ENCODE measurements at regions of chr6 and their contacts with region 1.

Region 1: DNA sequence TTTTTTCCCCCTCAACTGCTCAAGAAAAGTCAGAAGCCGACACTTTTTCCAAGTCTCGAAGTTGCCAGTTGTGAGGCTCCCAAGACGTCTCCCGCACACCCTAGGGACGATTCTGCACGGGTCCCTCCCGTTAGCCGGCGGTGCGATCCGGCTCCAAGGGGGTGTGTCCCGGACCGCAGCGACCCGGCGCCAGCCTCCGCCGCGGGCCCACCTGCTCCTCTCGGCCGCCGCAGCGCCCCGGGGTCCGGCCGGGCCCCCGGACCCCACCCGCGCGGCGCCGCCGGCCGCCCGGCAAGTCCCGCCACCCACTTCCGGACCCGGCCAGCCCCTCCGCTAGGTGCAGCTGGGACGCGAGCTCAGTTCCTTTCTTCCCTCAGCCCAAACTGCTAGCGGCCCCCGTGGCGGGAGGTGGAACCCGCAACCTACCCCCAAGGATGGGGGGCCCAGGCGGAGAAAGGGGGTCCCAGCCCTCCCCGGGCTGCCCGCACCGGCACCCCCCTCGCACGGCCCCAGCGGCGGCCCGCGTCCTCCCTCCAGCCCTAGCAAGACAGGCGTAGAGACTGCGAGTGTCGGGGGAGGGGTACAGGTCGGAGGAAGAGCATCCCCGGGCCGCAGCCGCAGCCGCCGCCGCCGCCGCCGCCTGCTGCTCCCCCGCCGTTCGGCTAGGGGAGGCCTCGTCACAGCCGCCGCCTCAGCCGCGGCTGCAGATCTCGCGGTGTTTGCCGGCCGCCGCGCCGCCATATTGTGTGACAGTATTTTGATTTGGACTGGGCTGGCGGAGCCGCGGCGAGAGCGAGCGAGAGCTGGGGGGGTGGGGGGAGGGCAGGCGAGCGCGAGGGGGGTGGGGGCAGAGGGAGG is 485 bp upstream of the TAB2 start:
- DNase-seq: peak; percentile 90
- H3K4me3 ChIP-seq: peak overlapping the region; percentile 69 to 97 (median 79)
- H3K27ac ChIP-seq: peak overlapping the region; percentile 92
- H3K4me1 ChIP-seq: peaks cover 18% of the 10 kb centered on the region
- H3K27me3 ChIP-seq: peaks cover 18 to 30% of the 10 kb centered on the region in 2 experiments
- CTCF ChIP-seq: no peak
- POLR2A ChIP-seq: no peak

Region 2: GRCh38 chr6:149233056-149233715 is 83.8 kb before region 1 on chr6:
- CTCF ChIA-PET with region 1: interaction called, 3 read pairs
- POLR2A ChIA-PET with region 1: no interaction called
- dilution Hi-C with region 1: no loop called
- intact Hi-C with region 1: loop called (anchors 1 kb)
- DNase-seq: peak; percentile 76
- H3K4me3 ChIP-seq: no peak overlapping the region
- H3K27ac ChIP-seq: peak overlapping the region; percentile 40
- H3K4me1 ChIP-seq: peaks cover 32% of the 10 kb centered on the region
- H3K27me3 ChIP-seq: peaks cover 0 to 5% of the 10 kb centered on the region in 2 experiments
- CTCF ChIP-seq: no peak
- POLR2A ChIP-seq: no peak

Region 3: DNA sequence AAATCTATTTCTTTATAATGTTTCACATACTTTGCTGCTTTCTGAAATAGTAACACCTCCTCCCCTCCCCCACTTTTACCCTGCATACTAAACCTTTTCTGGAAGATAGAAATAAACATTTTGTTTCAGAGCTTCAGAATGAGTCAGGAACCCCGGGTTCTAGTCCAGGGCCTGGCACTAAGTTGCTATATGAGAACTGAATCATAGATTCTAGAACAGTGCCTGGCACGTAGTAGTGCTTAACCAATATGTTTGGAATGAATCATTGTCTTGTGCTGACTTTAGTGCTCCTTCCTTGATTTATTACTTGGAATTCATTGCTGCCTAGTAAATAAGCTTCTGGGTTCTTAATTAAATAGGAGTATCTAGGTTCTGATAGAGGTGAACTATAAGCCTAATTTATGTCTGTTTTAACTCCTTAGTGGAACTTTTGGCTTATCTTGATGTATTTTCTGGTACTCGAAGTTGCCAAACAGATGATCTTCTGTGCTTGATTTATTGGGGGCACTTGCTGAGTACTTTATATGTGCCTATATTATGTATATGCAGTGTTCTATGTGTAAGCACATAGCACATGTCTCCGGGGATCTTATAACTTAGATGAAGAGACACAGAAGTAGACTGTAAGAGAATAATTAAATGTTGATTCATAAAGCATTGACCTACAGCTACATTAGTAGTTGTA is 19.0 kb after region 1 on chr6:
- CTCF ChIA-PET with region 1: interaction called, 49 read pairs
- POLR2A ChIA-PET with region 1: interaction called, 4 read pairs
- dilution Hi-C with region 1: no loop called
- intact Hi-C with region 1: loop called (anchors 1 kb)
- DNase-seq: peak; percentile 67
- H3K4me3 ChIP-seq: no peak overlapping the region
- H3K27ac ChIP-seq: peak overlapping the region; percentile 61
- H3K4me1 ChIP-seq: peaks cover 43% of the 10 kb centered on the region
- H3K27me3 ChIP-seq: no peaks in the 10 kb centered on the region
- CTCF ChIP-seq: no peak
- POLR2A ChIP-seq: no peak

Region 4: GRCh38 chr6:149410557-149410956 is 93.5 kb after region 1 on chr6:
- CTCF ChIA-PET with region 1: no interaction called
- POLR2A ChIA-PET with region 1: no interaction called
- dilution Hi-C with region 1: no loop called
- intact Hi-C with region 1: loop called (anchors 5 kb)
- DNase-seq: no peak
- H3K4me3 ChIP-seq: no peak overlapping the region
- H3K27ac ChIP-seq: no peak overlapping the region
- H3K4me1 ChIP-seq: no peaks in the 10 kb centered on the region
- H3K27me3 ChIP-seq: no peaks in the 10 kb centered on the region
- CTCF ChIP-seq: no peak
- POLR2A ChIP-seq: no peak

Region 5: GRCh38 chr6:149545754-149546528 is 228.9 kb after region 1 on chr6 and contains the start of gene PPIL4:
- CTCF ChIA-PET with region 1: no interaction called
- POLR2A ChIA-PET with region 1: no interaction called
- dilution Hi-C with region 1: no loop called
- intact Hi-C with region 1: no loop called
- DNase-seq: peak; percentile 96
- H3K4me3 ChIP-seq: peak within 1 kb of the TSS; percentile 59 to 85 (median 62)
- H3K27ac ChIP-seq: peak within 1 kb of the TSS; percentile 92
- H3K4me1 ChIP-seq: peaks cover 8% of the 10 kb centered on the region
- H3K27me3 ChIP-seq: peaks cover 2 to 7% of the 10 kb centered on the region in 2 experiments
- CTCF ChIP-seq: peak; percentile 82
- POLR2A ChIP-seq: peak; percentile 82
- total RNA-seq, gene PPIL4: 24.3 and 27.8 TPM in 2 replicates